Ascending aorta (tissue), 2 donors: ENCODE measurements at regions of chr7 and their contacts with region 1.

Region 1: DNA sequence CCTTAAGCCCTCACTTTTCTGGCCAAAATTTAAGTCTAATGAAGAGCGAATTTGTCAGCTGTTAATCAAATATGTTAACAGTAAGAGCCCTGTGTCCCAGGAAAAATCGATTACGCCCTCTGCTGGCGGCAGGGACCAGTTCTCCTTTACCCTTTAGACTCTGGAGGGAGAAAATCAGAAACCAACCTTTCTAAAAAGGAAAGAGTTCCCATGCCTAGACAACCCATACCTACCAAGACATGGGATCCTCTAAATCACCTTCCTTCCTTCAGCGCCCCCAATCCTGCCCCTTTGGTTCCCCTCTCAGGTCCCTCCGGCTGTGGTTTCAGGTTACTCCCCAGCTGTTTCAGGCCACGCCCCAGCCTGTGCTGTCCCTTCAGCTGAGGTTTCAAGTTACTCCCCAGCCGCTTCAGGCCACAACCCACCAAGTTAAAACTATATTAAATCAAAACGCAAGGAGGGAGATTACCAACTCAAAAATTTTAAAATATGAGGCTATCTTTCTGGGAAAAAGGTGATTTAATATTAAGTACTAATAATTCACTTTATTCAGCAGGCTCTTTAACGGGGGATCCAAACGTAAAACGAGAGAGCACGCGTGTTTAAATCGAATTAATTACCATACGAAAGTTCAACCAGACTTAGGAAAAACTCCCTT is 1.4 kb upstream of the AKR1B15 start:
- DNase-seq: peak in 1 of 2 donors; percentile 83
- H3K4me3 ChIP-seq: peak overlapping the region; percentile 53 to 57
- H3K27ac ChIP-seq: peak overlapping the region in 1 of 2 donors; percentile 25
- H3K4me1 ChIP-seq: no peaks in the 10 kb centered on the region
- H3K27me3 ChIP-seq: no peaks in the 10 kb centered on the region
- CTCF ChIP-seq: peak; percentile 57 to 86 (median 85)

Region 2: DNA sequence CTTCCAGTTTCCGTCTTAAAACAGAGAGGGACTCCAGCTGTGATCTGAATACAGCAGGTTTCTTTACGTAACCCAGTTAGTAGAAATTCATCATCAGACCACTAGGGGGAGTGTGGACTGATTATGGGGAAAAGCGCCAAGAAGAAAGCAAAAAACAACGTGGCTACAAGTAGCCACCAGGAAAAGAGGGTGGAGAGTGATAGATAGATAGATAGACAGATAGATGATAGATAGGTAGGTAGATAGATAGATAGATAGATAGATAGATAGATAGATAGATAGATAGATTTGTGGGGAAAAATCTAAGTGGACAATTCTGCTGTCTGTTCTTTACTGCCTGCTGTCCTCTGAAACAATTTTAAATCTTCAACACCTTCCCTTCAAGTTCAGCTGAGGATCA is 32.9 kb before region 1 on chr7:
- intact Hi-C with region 1: loop called (anchors 1 kb)
- DNase-seq: no peak
- H3K4me3 ChIP-seq: no peak overlapping the region
- H3K27ac ChIP-seq: no peak overlapping the region
- H3K4me1 ChIP-seq: peaks cover 0 to 12% of the 10 kb centered on the region in 2 donors
- H3K27me3 ChIP-seq: no peaks in the 10 kb centered on the region
- CTCF ChIP-seq: peak; percentile 62 to 80 (median 75)

Region 3: GRCh38 chr7:134605973-134606923 is 58.7 kb after region 1 on chr7:
- intact Hi-C with region 1: loop called (anchors 1 kb)
- DNase-seq: peak in 1 of 2 donors; percentile 77
- H3K4me3 ChIP-seq: peak overlapping the region in 1 of 2 donors; percentile 24
- H3K27ac ChIP-seq: no peak overlapping the region
- H3K4me1 ChIP-seq: no peaks in the 10 kb centered on the region
- H3K27me3 ChIP-seq: no peaks in the 10 kb centered on the region
- CTCF ChIP-seq: peak; percentile 84 to 92 (median 86)

Region 4: DNA sequence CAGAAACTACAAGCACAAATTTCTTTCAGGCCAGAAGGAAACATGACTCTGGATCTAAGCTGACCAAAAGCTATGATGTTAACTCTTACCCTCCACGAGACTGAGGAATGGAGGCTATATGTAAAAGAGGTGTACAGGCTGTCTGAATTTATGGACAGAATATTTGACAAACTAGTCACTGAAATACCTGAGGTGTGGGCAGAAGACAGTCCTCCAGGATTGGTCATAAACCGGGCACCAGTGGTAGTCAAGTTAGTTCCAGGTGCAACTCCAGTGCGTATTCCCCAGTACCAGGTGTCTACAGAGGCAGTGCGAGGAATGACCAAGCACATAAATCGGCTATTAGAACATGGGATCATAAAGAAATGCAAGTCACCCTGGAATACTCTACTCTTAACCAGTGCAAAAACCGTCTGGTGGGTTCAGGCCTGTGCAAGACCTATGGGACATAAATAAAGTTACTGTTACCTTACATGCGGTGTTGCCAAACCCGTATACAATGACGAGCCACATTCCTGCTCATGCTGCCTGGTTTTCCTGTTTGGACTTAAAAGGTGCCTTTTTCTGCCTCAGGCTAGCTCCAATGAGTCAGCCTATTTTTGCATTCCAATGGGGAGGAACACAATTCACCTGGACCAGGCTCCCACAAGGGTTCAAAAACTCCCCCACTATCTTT is 629.6 kb after region 1 on chr7:
- intact Hi-C with region 1: no loop called
- DNase-seq: no peak
- H3K4me3 ChIP-seq: no peak overlapping the region
- H3K27ac ChIP-seq: no peak overlapping the region
- H3K4me1 ChIP-seq: no peaks in the 10 kb centered on the region
- H3K27me3 ChIP-seq: no peaks in the 10 kb centered on the region
- CTCF ChIP-seq: no peak